Activated naive CD8-positive, alpha-beta T cell treated with anti-CD3 and anti-CD28 coated beads, Interleukin-2, amount 10 ng/mL, durations not matched to agents 7 days and 5 days (primary cell): ENCODE measurements at regions of chr22 and their contacts with region 1.

Region 1: GRCh38 chr22:28800308-28801077 is at the start of gene XBP1:
- DNase-seq: peak; percentile 94
- ATAC-seq: peak; percentile 94
- H3K4me3 Mint-ChIP-seq: peak within 1 kb of the TSS; percentile 99
- H3K27ac Mint-ChIP-seq: peak within 1 kb of the TSS; percentile 97
- H3K4me1 Mint-ChIP-seq: peaks cover 39% of the 10 kb centered on the region
- H3K27me3 Mint-ChIP-seq: no peaks in the 10 kb centered on the region
- total RNA-seq, gene XBP1: 178 to 179 TPM

Region 2: DNA sequence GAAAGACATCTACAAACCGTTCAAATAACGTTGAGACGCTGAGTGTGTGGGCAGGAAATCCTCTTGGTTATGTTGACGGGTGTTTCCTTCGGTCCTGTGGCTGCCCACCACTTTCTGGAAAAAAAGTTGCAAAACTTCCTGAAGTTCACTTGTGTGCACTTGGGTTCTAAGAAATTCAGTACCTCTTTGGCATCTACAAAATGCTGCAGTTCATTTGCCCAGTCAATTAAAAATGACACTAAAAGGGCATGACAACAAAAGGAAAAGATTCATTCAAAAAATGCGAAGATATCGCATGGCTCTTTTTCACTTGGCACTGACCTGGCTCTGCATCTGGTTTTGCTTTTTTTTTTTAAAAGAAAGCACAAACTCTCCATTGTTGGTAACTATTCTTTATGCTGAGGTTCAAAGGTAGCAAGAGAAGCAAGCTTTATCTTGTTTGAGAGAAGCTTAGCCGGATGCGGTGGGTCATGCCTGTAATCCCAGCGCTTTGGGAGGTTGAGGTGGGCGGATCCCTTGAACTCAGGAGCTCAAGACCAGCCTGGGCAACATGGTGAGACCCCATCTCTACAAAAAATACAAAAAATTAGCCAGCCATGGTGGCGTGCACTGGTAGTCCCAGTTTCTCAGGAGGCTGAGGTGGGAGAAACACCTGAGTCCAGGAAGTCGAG is 10.5 kb after region 1 on chr22:
- POLR2A ChIA-PET with region 1: interaction called, 208 read pairs
- DNase-seq: peak; percentile 53
- ATAC-seq: peak; percentile 42
- H3K4me3 Mint-ChIP-seq: peak overlapping the region; percentile 75
- H3K27ac Mint-ChIP-seq: peak overlapping the region; percentile 95
- H3K4me1 Mint-ChIP-seq: peaks cover 67% of the 10 kb centered on the region
- H3K27me3 Mint-ChIP-seq: peaks cover 2% of the 10 kb centered on the region

Region 3: GRCh38 chr22:28817919-28818909 is 17.7 kb after region 1 on chr22:
- POLR2A ChIA-PET with region 1: interaction called, 208 read pairs
- DNase-seq: no peak
- ATAC-seq: no peak
- H3K4me3 Mint-ChIP-seq: peak overlapping the region; percentile 57
- H3K27ac Mint-ChIP-seq: peak overlapping the region; percentile 76
- H3K4me1 Mint-ChIP-seq: peaks cover 70% of the 10 kb centered on the region
- H3K27me3 Mint-ChIP-seq: peaks cover 2% of the 10 kb centered on the region

Region 4: GRCh38 chr22:28829358-28830181 is 29.1 kb after region 1 on chr22:
- POLR2A ChIA-PET with region 1: interaction called, 130 read pairs
- DNase-seq: peak; percentile 79
- ATAC-seq: peak; percentile 63
- H3K4me3 Mint-ChIP-seq: peak overlapping the region; percentile 57
- H3K27ac Mint-ChIP-seq: peak overlapping the region; percentile 66
- H3K4me1 Mint-ChIP-seq: peaks cover 36% of the 10 kb centered on the region
- H3K27me3 Mint-ChIP-seq: peaks cover 2% of the 10 kb centered on the region

Region 5: GRCh38 chr22:28841111-28841510 is 40.6 kb after region 1 on chr22:
- POLR2A ChIA-PET with region 1: no interaction called
- DNase-seq: no peak
- ATAC-seq: no peak
- H3K4me3 Mint-ChIP-seq: no peak overlapping the region
- H3K27ac Mint-ChIP-seq: no peak overlapping the region
- H3K4me1 Mint-ChIP-seq: no peaks in the 10 kb centered on the region
- H3K27me3 Mint-ChIP-seq: peaks cover 4% of the 10 kb centered on the region